ENCODE measurements at regions of chr7 and their contacts with region 1.

Region 1: GRCh38 chr7:23273141-23273599 is 26.0 kb upstream of the MALSU1 start:
- DNase-seq: peak; percentile 78
- ATAC-seq: peak; percentile 98
- H3K4me3 ChIP-seq: peak overlapping the region; percentile 56
- H3K27ac ChIP-seq: peak overlapping the region; percentile 73
- H3K4me1 ChIP-seq: peaks cover 3% of the 10 kb centered on the region; the same call in 1 of the 2 replicates
- H3K27me3 ChIP-seq: no peaks in the 10 kb centered on the region
- CTCF ChIP-seq: peak; percentile 90 to 94 (median 92)
- EP300 ChIP-seq: no peak
- POLR2A ChIP-seq: peak; percentile 39; the same call in 1 of the 2 replicates
- RAD21 ChIP-seq: peak; percentile 67

Region 2: DNA sequence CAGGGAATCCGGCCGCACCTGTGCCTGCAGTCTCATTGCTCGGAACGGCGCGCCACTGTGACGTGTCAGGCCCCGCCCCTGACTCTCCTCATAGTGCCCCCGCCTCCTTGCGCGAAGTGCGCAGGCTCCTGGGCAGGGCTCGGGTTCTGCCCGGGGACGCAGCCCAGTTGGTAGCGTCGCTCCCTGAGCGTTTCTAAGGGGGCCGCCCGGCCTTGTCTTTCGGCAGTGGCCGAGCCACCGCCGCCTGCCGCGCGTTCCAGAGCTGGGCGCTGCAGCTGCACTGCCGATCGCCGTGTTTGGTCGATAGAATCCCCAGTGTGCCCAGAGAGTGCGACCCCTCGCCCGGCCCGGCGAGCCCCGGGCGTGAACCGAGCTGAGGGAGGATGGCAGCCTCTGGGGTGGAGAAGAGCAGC is 167.5 kb before region 1 on chr7 and contains the start of gene KLHL7:
- CTCF ChIA-PET with region 1: interaction called, 11 read pairs
- POLR2A ChIA-PET with region 1: no interaction called
- RAD21 ChIA-PET with region 1: interaction called, 14 read pairs
- SMC1A ChIA-PET with region 1: interaction called, 4 read pairs
- in situ Hi-C with region 1: no loop called
- intact Hi-C with region 1: no loop called
- DNase-seq: peak; percentile 64
- ATAC-seq: peak; percentile 98
- H3K4me3 ChIP-seq: peak within 1 kb of the TSS; percentile 99
- H3K27ac ChIP-seq: peak within 1 kb of the TSS; percentile 77
- H3K4me1 ChIP-seq: peaks cover 7% of the 10 kb centered on the region; the same call in 1 of the 2 replicates
- H3K27me3 ChIP-seq: no peaks in the 10 kb centered on the region
- CTCF ChIP-seq: no peak
- EP300 ChIP-seq: no peak
- POLR2A ChIP-seq: peak; percentile 92
- RAD21 ChIP-seq: no peak
- polyA plus RNA-seq, gene KLHL7: 6.4 to 12.4 TPM

Region 3: DNA sequence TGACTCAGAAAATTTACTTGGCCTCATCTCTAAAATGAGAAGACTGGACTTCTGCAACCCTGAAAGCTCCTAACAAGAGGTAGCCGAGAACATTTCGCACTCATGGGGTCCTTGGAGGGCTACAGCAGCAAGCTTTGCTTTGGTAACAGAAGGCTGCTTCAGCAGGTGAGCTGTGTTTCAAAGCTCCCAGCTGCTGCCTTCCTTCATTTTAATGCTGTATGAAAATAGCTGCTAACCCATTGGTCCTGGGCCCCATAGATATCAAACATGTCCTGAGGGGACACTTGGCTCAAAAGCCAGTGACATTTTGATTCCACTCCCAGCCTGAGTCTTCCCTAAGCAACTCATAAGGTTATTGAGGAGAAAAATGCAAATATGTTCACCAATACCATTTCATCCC is 11.7 kb after region 1 on chr7:
- CTCF ChIA-PET with region 1: interaction called, 32 read pairs
- POLR2A ChIA-PET with region 1: no interaction called
- RAD21 ChIA-PET with region 1: interaction called, 3 read pairs
- SMC1A ChIA-PET with region 1: interaction called, 12 read pairs
- in situ Hi-C with region 1: no loop called
- intact Hi-C with region 1: no loop called
- DNase-seq: no peak
- ATAC-seq: no peak
- H3K4me3 ChIP-seq: no peak overlapping the region
- H3K27ac ChIP-seq: no peak overlapping the region
- H3K4me1 ChIP-seq: no peaks in the 10 kb centered on the region
- H3K27me3 ChIP-seq: no peaks in the 10 kb centered on the region
- CTCF ChIP-seq: no peak
- EP300 ChIP-seq: no peak
- POLR2A ChIP-seq: no peak
- RAD21 ChIP-seq: no peak

Region 4: DNA sequence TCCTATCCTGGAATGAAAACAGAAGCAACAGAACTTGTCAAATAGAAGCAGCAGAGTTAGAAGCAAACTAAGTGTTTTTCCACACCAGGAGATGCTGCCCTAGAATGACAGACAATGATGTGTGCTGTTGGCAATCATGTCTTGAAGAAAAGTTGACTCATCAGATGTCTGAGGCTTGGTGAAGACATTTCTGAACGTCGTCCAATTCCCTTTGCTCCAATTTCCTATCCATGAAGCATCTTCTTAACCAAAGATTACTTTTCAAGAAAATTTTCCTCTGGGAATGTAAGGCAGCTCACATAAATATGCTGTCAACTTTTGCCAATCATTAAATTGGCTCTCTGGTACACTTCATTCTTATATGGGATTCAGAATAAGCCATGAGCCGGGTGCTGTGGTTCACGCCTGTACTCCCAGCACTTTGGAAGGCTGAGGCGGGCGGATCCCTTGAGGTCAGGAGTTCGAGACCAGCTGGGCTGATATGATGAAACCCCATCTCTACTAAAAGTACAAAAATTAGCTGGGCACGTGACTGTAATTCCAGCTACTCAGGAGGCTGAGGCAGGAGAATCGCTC is 60.6 kb after region 1 on chr7:
- CTCF ChIA-PET with region 1: no interaction called
- POLR2A ChIA-PET with region 1: no interaction called
- RAD21 ChIA-PET with region 1: no interaction called
- SMC1A ChIA-PET with region 1: no interaction called
- in situ Hi-C with region 1: no loop called
- intact Hi-C with region 1: no loop called
- DNase-seq: no peak
- ATAC-seq: no peak
- H3K4me3 ChIP-seq: no peak overlapping the region
- H3K27ac ChIP-seq: no peak overlapping the region
- H3K4me1 ChIP-seq: no peaks in the 10 kb centered on the region
- H3K27me3 ChIP-seq: no peaks in the 10 kb centered on the region
- CTCF ChIP-seq: no peak
- EP300 ChIP-seq: no peak
- POLR2A ChIP-seq: no peak
- RAD21 ChIP-seq: no peak

Region 5: DNA sequence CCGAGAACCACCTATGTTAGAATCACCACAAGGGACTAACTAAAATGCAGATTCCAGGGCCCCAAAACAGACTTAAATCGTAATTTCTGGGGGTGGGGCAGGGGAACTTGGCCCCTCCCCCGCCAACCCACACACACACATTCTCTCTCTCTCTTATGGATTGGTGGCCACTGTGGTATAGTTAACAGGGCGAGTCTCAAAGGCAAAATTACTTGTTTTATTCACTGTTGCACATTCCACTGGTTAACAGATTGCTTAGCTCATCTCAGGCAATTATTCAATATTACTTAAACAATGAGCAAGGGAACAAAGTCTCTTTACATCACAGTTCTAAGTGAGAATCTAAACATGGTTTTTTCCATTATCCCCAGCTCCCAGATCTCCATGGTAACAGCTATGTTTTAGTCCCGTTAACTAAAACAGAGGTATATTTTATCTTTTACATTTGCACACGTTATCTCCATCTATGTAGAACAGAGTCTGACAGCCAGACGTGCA is 158.6 kb after region 1 on chr7:
- CTCF ChIA-PET with region 1: interaction called, 6 read pairs
- POLR2A ChIA-PET with region 1: no interaction called
- RAD21 ChIA-PET with region 1: interaction called, 8 read pairs
- SMC1A ChIA-PET with region 1: interaction called, 5 read pairs
- in situ Hi-C with region 1: no loop called
- intact Hi-C with region 1: loop called (anchors 5 kb)
- DNase-seq: no peak
- ATAC-seq: peak; percentile 14; the same call in 2 of the 3 replicates
- H3K4me3 ChIP-seq: no peak overlapping the region
- H3K27ac ChIP-seq: no peak overlapping the region
- H3K4me1 ChIP-seq: peaks cover 7% of the 10 kb centered on the region; the same call in 1 of the 2 replicates
- H3K27me3 ChIP-seq: no peaks in the 10 kb centered on the region
- CTCF ChIP-seq: no peak
- EP300 ChIP-seq: no peak
- POLR2A ChIP-seq: no peak
- RAD21 ChIP-seq: no peak

Region 6: DNA sequence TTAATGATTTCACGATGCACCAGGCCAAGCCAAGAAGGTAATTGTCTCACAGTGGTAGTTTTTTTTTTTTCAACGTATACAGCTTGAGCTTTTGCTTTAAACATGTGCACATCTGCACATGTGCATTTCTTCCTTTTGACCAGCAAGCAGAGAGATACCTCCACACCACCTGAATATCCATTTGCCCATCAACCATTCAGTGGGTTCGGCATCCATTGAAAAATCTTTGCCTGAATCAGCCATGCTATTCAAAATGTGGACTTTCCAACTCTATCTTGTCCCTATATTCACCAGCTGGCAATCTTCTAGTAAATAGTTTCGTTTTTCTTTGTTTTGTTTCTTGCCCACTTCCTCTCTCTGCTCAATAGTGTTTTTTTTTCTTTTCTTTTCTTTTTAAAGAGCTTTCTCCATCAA is 266.3 kb after region 1 on chr7:
- CTCF ChIA-PET with region 1: interaction called, 69 read pairs
- POLR2A ChIA-PET with region 1: interaction called, 5 read pairs
- RAD21 ChIA-PET with region 1: interaction called, 37 read pairs
- SMC1A ChIA-PET with region 1: interaction called, 18 read pairs
- in situ Hi-C with region 1: no loop called
- intact Hi-C with region 1: no loop called
- DNase-seq: peak; percentile 62
- ATAC-seq: peak; percentile 80
- H3K4me3 ChIP-seq: no peak overlapping the region
- H3K27ac ChIP-seq: peak overlapping the region; percentile 79
- H3K4me1 ChIP-seq: peaks cover 15% of the 10 kb centered on the region
- H3K27me3 ChIP-seq: no peaks in the 10 kb centered on the region
- CTCF ChIP-seq: no peak
- EP300 ChIP-seq: no peak
- POLR2A ChIP-seq: no peak
- RAD21 ChIP-seq: no peak

Region 7: GRCh38 chr7:23633417-23633816 is 360.2 kb after region 1 on chr7:
- CTCF ChIA-PET with region 1: no interaction called
- POLR2A ChIA-PET with region 1: no interaction called
- RAD21 ChIA-PET with region 1: no interaction called
- SMC1A ChIA-PET with region 1: no interaction called
- in situ Hi-C with region 1: no loop called
- intact Hi-C with region 1: no loop called
- DNase-seq: no peak
- ATAC-seq: no peak
- H3K4me3 ChIP-seq: no peak overlapping the region
- H3K27ac ChIP-seq: no peak overlapping the region
- H3K4me1 ChIP-seq: no peaks in the 10 kb centered on the region
- H3K27me3 ChIP-seq: no peaks in the 10 kb centered on the region
- CTCF ChIP-seq: no peak
- EP300 ChIP-seq: no peak
- POLR2A ChIP-seq: no peak
- RAD21 ChIP-seq: no peak

Region 8: GRCh38 chr7:23712368-23713284 is 439.5 kb after region 1 on chr7:
- CTCF ChIA-PET with region 1: interaction called, 19 read pairs
- POLR2A ChIA-PET with region 1: no interaction called
- RAD21 ChIA-PET with region 1: interaction called, 7 read pairs
- SMC1A ChIA-PET with region 1: interaction called, 8 read pairs
- in situ Hi-C with region 1: no loop called
- intact Hi-C with region 1: loop called (anchors 5 kb)
- DNase-seq: peak; percentile 3
- ATAC-seq: peak; percentile 62
- H3K4me3 ChIP-seq: no peak overlapping the region
- H3K27ac ChIP-seq: no peak overlapping the region
- H3K4me1 ChIP-seq: no peaks in the 10 kb centered on the region
- H3K27me3 ChIP-seq: no peaks in the 10 kb centered on the region
- CTCF ChIP-seq: peak; percentile 22 to 70 (median 27); a peak in 4 of 6 replicates
- EP300 ChIP-seq: no peak
- POLR2A ChIP-seq: no peak
- RAD21 ChIP-seq: peak; percentile 98